Aorta (tissue), 5 donors: ENCODE measurements at regions of chr13 and their contacts with region 1.

Region 1: GRCh38 chr13:32586080-32586900 is at the start of gene PDS5B:
- DNase-seq: peak; percentile 96 to 97
- ATAC-seq: peak; percentile 99
- H3K4me3 ChIP-seq: peak within 1 kb of the TSS; percentile 94 to 95
- H3K27ac ChIP-seq: peak within 1 kb of the TSS; percentile 80 to 84
- H3K4me1 ChIP-seq: peaks cover 0 to 2% of the 10 kb centered on the region in 2 donors
- H3K27me3 ChIP-seq: no peaks in the 10 kb centered on the region
- total RNA-seq, gene PDS5B: 46.2 to 52.9 TPM

Region 2: GRCh38 chr13:32548837-32549236 is 37.5 kb before region 1 on chr13:
- intact Hi-C with region 1: no loop called
- DNase-seq: no peak
- ATAC-seq: no peak
- H3K4me3 ChIP-seq: no peak overlapping the region
- H3K27ac ChIP-seq: no peak overlapping the region
- H3K4me1 ChIP-seq: no peaks in the 10 kb centered on the region
- H3K27me3 ChIP-seq: no peaks in the 10 kb centered on the region

Region 3: DNA sequence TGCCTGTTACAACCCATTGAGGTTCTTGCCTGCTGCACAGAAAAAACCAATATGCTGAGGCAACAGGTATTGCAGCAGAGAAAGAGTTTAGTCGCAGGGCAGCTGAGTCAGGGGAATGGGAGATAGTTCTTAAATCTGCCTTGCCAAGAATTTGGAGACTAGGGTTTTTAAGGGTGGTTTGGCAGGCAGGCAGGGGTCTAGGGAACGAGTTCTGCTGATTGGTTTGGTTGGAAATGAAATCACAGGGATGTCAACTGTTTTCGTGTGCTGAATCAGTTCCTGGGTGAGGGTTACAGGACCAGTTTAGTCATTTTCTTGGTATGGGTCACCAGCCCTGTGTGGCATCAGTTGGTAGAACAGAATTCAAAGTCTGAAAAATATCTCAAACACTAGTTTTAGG is 36.5 kb after region 1 on chr13:
- intact Hi-C with region 1: no loop called
- DNase-seq: no peak
- ATAC-seq: no peak
- H3K4me3 ChIP-seq: no peak overlapping the region
- H3K27ac ChIP-seq: no peak overlapping the region
- H3K4me1 ChIP-seq: peaks cover 0 to 2% of the 10 kb centered on the region in 2 donors
- H3K27me3 ChIP-seq: no peaks in the 10 kb centered on the region

Region 4: GRCh38 chr13:32639502-32640105 is 53.3 kb after region 1 on chr13:
- intact Hi-C with region 1: loop called (anchors 2 to 5 kb)
- DNase-seq: peak in 1 of 2 donors; percentile 63
- ATAC-seq: peak; percentile 90
- H3K4me3 ChIP-seq: no peak overlapping the region
- H3K27ac ChIP-seq: no peak overlapping the region
- H3K4me1 ChIP-seq: peaks cover 0 to 2% of the 10 kb centered on the region in 2 donors
- H3K27me3 ChIP-seq: no peaks in the 10 kb centered on the region

Region 5: GRCh38 chr13:32669030-32669646 is 82.8 kb after region 1 on chr13:
- intact Hi-C with region 1: loop called in 1 of 2 experiments (anchors 2 kb)
- DNase-seq: no peak
- ATAC-seq: no peak
- H3K4me3 ChIP-seq: no peak overlapping the region
- H3K27ac ChIP-seq: no peak overlapping the region
- H3K4me1 ChIP-seq: no peaks in the 10 kb centered on the region
- H3K27me3 ChIP-seq: no peaks in the 10 kb centered on the region